Activated B cell treated with CpG ODN at 0.5 μM for 24 hours (primary cell): ENCODE measurements at regions of chr12 and their contacts with region 1.

Region 1: GRCh38 chr12:118016424-118017264 is at the start of gene RFC5:
- DNase-seq: peak; percentile 97
- ATAC-seq: peak; percentile 97
- H3K4me3 Mint-ChIP-seq: peak within 1 kb of the TSS; percentile 89
- H3K27ac Mint-ChIP-seq: peak within 1 kb of the TSS; percentile 76
- H3K4me1 Mint-ChIP-seq: peaks cover 20% of the 10 kb centered on the region
- H3K27me3 Mint-ChIP-seq: no peaks in the 10 kb centered on the region
- CTCF ChIP-seq: no peak
- total RNA-seq, gene RFC5: 17.5 and 20.1 TPM in 2 replicates

Region 2: GRCh38 chr12:117874842-117875434 is 141.7 kb before region 1 on chr12:
- CTCF ChIA-PET with region 1: no interaction called
- POLR2A ChIA-PET with region 1: no interaction called
- intact Hi-C with region 1: loop called (anchors 5 kb)
- DNase-seq: peak; percentile 44
- ATAC-seq: peak; percentile 73
- H3K4me3 Mint-ChIP-seq: no peak overlapping the region
- H3K27ac Mint-ChIP-seq: no peak overlapping the region
- H3K4me1 Mint-ChIP-seq: peaks cover 8% of the 10 kb centered on the region
- H3K27me3 Mint-ChIP-seq: peaks cover 13% of the 10 kb centered on the region
- CTCF ChIP-seq: peak; percentile 39

Region 3: GRCh38 chr12:118120579-118121363 is 104.1 kb after region 1 on chr12:
- CTCF ChIA-PET with region 1: interaction called, 3 read pairs
- POLR2A ChIA-PET with region 1: no interaction called
- intact Hi-C with region 1: loop called (anchors 1 kb)
- DNase-seq: peak; percentile 37
- ATAC-seq: peak; percentile 61
- H3K4me3 Mint-ChIP-seq: no peak overlapping the region
- H3K27ac Mint-ChIP-seq: peak overlapping the region; percentile 46
- H3K4me1 Mint-ChIP-seq: peaks cover 2% of the 10 kb centered on the region
- H3K27me3 Mint-ChIP-seq: no peaks in the 10 kb centered on the region
- CTCF ChIP-seq: peak; percentile 77

Region 4: DNA sequence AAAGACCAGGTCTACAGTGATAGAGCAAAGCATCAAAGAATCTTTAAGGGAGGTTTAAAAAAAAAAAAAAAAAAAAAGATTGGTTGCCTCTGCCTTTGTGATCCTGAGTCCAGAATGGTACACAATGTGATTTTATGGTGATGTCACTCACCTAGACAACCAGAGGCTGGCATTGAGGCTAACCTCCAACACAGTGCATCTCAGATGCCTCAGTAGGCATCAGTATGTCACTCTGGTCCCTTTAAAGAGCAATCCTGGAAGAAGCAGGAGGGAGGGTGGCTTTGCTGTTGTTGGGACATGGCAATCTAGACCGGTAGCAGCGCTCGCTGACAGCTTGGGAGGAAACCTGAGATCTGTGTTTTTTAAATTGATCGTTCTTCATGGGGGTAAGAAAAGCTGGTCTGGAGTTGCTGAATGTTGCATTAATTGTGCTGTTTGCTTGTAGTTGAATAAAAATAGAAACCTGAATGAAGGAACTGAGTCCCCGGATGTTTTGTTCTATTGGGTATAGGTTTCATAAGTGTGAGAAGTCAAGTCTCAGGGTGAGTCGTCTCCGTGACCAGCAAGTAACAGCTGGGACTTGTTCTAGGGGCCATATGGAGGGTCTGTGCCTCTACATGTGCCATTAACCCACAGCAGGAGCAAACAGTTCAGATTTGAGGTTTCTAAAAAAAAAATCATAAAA is 128.6 kb after region 1 on chr12:
- CTCF ChIA-PET with region 1: no interaction called
- POLR2A ChIA-PET with region 1: no interaction called
- intact Hi-C with region 1: no loop called
- DNase-seq: no peak
- ATAC-seq: no peak
- H3K4me3 Mint-ChIP-seq: no peak overlapping the region
- H3K27ac Mint-ChIP-seq: peak overlapping the region; percentile 51
- H3K4me1 Mint-ChIP-seq: peaks cover 9% of the 10 kb centered on the region
- H3K27me3 Mint-ChIP-seq: no peaks in the 10 kb centered on the region
- CTCF ChIP-seq: no peak

Region 5: GRCh38 chr12:119667577-119668323 is 1651.1 kb after region 1 on chr12 and contains the start of gene PRKAB1:
- CTCF ChIA-PET with region 1: no interaction called
- POLR2A ChIA-PET with region 1: no interaction called
- intact Hi-C with region 1: loop called (anchors 2 kb)
- DNase-seq: peak; percentile 92
- ATAC-seq: peak; percentile 91
- H3K4me3 Mint-ChIP-seq: peak within 1 kb of the TSS; percentile 90
- H3K27ac Mint-ChIP-seq: peak within 1 kb of the TSS; percentile 92
- H3K4me1 Mint-ChIP-seq: peaks cover 59% of the 10 kb centered on the region
- H3K27me3 Mint-ChIP-seq: no peaks in the 10 kb centered on the region
- CTCF ChIP-seq: peak; percentile 39
- total RNA-seq, gene PRKAB1: 43.9 and 49.1 TPM in 2 replicates